ENCODE measurements at regions of chr17 and their contacts with region 1.

Region 1: DNA sequence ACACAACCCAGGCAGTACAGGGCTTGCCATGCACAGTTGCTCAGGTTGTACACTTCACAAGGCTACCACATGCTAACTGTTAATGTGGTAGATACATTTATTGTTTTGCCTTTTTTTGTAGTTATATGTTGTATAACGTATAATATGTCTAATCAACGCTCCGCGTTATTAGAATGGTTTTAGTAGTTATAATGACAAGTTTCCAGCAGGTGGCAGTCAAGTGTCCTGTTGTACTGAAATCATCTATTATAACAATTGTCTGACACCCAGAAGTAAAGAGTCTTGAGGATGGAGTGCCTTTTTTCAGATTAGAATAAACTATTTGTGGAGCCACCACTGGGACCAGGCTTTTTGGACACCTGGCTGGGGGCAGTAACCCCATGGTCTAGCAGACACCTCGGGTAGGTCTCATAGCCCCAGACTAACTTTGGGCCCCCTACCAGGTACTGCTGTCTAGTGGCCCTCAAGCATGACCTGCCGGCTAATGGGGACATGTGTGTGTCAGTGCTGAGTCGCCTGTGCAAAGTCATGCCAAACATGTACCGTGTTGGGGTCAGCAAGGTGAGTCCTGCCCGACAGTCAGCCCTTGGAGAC is 32.8 kb downstream of the MYO15A start:
- DNase-seq: no peak
- ATAC-seq: peak; percentile 69
- H3K4me3 Mint-ChIP-seq: no peak overlapping the region
- H3K27ac Mint-ChIP-seq: no peak overlapping the region
- H3K4me1 Mint-ChIP-seq: peaks cover 4% of the 10 kb centered on the region
- H3K27me3 Mint-ChIP-seq: peaks cover 6% of the 10 kb centered on the region
- CTCF ChIP-seq: peak; percentile 31

Region 2: GRCh38 chr17:18158022-18158600 is 16.8 kb after region 1 on chr17:
- CTCF ChIA-PET with region 1: no interaction called
- POLR2A ChIA-PET with region 1: no interaction called
- intact Hi-C with region 1: loop called (anchors 1 kb)
- DNase-seq: peak; percentile 91
- ATAC-seq: peak; percentile 75
- H3K4me3 Mint-ChIP-seq: peak overlapping the region; percentile 89
- H3K27ac Mint-ChIP-seq: peak overlapping the region; percentile 85
- H3K4me1 Mint-ChIP-seq: peaks cover 23% of the 10 kb centered on the region
- H3K27me3 Mint-ChIP-seq: no peaks in the 10 kb centered on the region
- CTCF ChIP-seq: no peak

Region 3: DNA sequence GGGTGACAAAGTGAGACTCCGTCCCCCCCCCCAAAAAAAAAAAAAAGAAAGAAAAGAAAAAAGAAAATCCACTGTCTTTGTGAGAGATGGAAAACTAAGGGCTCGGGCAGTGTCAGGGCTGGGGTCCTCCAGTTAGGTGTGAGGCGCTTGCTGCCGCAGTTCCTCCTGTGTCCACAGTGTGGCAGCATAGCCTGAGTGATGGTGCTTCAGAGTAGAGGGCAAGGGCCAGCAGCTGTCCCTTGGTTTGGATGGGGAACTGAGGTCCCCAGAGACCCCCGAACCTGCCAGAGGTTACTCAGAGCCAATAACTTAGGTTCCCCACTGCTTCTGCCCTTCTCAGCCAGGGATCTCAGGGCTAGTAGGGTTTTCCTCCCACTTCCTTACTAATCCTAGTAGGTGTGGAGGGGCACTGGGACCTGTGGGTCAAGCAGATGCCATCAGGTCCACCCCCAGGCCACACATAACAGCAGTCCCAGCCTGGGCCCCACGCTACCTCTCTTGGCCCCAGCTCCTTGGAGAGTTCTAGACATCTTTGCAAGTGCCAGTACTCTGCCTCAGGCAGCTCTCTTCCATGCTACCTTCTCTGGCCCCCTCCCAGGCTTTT is 76.2 kb after region 1 on chr17:
- CTCF ChIA-PET with region 1: interaction called, 4 read pairs
- POLR2A ChIA-PET with region 1: no interaction called
- intact Hi-C with region 1: loop called (anchors 1 kb)
- DNase-seq: peak; percentile 64
- ATAC-seq: peak; percentile 98
- H3K4me3 Mint-ChIP-seq: no peak overlapping the region
- H3K27ac Mint-ChIP-seq: no peak overlapping the region
- H3K4me1 Mint-ChIP-seq: peaks cover 5% of the 10 kb centered on the region
- H3K27me3 Mint-ChIP-seq: no peaks in the 10 kb centered on the region
- CTCF ChIP-seq: no peak

Region 4: DNA sequence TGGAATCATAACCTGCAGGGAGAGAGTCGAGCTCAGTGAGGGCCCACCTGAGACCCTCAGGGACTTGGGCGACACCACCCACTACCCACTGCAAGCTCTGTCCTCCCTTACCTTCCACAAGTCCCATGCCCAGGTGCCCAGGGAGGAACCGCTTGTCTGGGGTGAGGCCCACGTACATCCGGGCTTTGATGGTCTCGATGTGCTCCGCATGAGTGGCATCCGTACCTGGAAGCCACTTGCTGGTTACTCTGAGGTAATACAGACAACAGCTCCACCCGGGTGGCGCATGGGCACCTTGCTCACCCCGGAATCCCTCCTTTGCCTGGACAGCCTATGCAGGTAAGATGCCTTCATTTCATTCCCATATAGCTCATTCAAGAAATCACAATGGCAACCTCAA is 144.0 kb after region 1 on chr17:
- CTCF ChIA-PET with region 1: no interaction called
- POLR2A ChIA-PET with region 1: no interaction called
- intact Hi-C with region 1: no loop called
- DNase-seq: no peak
- ATAC-seq: no peak
- H3K4me3 Mint-ChIP-seq: no peak overlapping the region
- H3K27ac Mint-ChIP-seq: no peak overlapping the region
- H3K4me1 Mint-ChIP-seq: no peaks in the 10 kb centered on the region
- H3K27me3 Mint-ChIP-seq: no peaks in the 10 kb centered on the region
- CTCF ChIP-seq: no peak

Measured in activated B cell treated with CpG ODN at 0.5 μM for 24 hours (primary cell).